ENCODE measurements at regions of chr17 and their contacts with region 1.

Region 1: DNA sequence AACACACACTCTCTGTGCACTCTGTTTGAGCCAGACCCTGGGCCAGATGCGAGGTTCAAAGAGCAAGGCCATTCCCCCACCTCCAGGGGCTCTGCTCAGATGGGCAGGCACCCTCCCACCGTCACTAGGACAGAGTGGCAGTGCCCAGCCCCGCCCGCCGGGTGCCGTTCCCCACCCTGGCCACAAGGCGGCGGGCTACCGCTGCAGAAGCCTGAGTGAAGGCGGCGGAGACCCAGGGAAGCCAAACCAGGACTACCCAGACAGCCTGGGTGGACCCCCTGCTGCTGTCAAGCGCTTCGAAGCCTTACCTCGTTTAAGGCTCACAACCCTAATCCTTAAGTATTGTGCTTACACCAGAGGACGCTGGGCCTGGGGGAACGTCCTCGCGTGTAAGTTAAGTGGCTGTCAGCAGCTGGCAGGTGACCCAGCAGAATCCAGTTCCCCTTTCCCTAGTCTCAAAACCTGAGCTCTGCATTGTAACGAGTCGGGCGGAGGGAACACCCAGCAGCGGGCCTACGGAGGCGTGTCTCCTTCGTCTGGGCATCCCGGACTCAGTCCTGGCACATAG is 4.5 kb downstream of the ARHGAP27 start:
- DNase-seq: peak; percentile 72 to 84
- ATAC-seq: peak; percentile 79 to 86 (median 86)
- H3K4me3 ChIP-seq: peak overlapping the region; percentile 2
- H3K27ac ChIP-seq: no peak overlapping the region
- H3K4me1 ChIP-seq: peaks cover 22% of the 10 kb centered on the region
- H3K27me3 ChIP-seq: peaks cover 0 to 48% (median 25%) of the 10 kb centered on the region in 3 donors
- CTCF ChIP-seq: peak; percentile 99

Region 2: GRCh38 chr17:45115871-45116724 is 312.0 kb before region 1 on chr17:
- intact Hi-C with region 1: no loop called
- DNase-seq: peak in 1 of 2 donors; percentile 7
- ATAC-seq: no peak
- H3K4me3 ChIP-seq: no peak overlapping the region
- H3K27ac ChIP-seq: no peak overlapping the region
- H3K4me1 ChIP-seq: peaks cover 11% of the 10 kb centered on the region
- H3K27me3 ChIP-seq: no peaks in the 10 kb centered on the region
- CTCF ChIP-seq: no peak

Region 3: GRCh38 chr17:45270828-45271418 is 157.2 kb before region 1 on chr17:
- intact Hi-C with region 1: no loop called
- DNase-seq: peak in 1 of 2 donors; percentile 55
- ATAC-seq: peak; percentile 36 to 56 (median 43)
- H3K4me3 ChIP-seq: no peak overlapping the region
- H3K27ac ChIP-seq: no peak overlapping the region
- H3K4me1 ChIP-seq: peaks cover 12% of the 10 kb centered on the region
- H3K27me3 ChIP-seq: no peaks in the 10 kb centered on the region
- CTCF ChIP-seq: peak; percentile 38

Region 4: GRCh38 chr17:45584092-45585036 is 156.2 kb after region 1 on chr17:
- intact Hi-C with region 1: loop called in 1 of 2 experiments (anchors 10 kb)
- DNase-seq: peak; percentile 66 to 83
- ATAC-seq: peak; percentile 79 to 89 (median 80)
- H3K4me3 ChIP-seq: peak overlapping the region; percentile 71
- H3K27ac ChIP-seq: peak overlapping the region; percentile 70
- H3K4me1 ChIP-seq: peaks cover 36% of the 10 kb centered on the region
- H3K27me3 ChIP-seq: peaks cover 0 to 42% (median 13%) of the 10 kb centered on the region in 3 donors
- CTCF ChIP-seq: no peak

Region 5: DNA sequence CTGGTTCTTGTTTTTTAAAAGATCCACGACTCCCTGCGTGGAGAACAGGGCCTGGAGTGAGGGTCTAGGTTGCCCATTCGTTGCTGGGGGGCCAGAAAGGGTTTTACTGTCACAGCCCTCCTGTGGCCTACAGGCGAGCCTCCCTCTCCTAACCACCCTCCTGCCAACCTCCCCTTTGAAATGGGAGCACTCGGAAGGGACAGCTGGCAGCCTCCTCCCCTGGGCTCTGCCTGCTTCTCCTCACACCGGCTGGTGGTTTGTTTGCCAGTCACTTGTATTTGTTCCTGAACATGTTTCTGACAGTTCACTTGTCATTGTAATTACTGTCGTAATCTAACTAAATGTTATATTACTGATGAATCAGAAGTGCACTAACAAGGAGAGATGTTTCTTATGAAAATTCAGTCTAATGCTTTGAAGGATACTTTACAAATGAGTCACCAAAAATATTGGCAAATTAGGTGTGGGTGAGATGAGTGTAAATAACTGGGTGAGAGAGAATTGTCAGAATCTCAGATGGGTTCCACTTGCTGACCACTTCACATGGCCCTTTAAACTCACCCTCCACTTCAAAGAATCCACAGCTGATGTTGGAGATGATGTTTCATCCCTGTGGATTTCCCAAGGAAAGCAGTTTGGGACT is 413.9 kb after region 1 on chr17:
- intact Hi-C with region 1: loop called in 1 of 2 experiments (anchors 10 kb)
- DNase-seq: no peak
- ATAC-seq: peak in 1 of 4 donors; percentile 40
- H3K4me3 ChIP-seq: no peak overlapping the region
- H3K27ac ChIP-seq: no peak overlapping the region
- H3K4me1 ChIP-seq: no peaks in the 10 kb centered on the region
- H3K27me3 ChIP-seq: no peaks in the 10 kb centered on the region
- CTCF ChIP-seq: no peak